CD4-positive, alpha-beta memory T cell (primary cell): ENCODE measurements at regions of chr5 and their contacts with region 1.

Region 1: GRCh38 chr5:157858527-157859226 is at the start of gene CLINT1:
- DNase-seq: peak; percentile 81 to 88 (median 85)
- H3K4me3 ChIP-seq: peak within 1 kb of the TSS; percentile 54 to 82
- H3K4me3 Mint-ChIP-seq: peak within 1 kb of the TSS; percentile 94 to 99 (median 95)
- H3K27ac ChIP-seq: peak within 1 kb of the TSS; percentile 85
- H3K27ac Mint-ChIP-seq: peak within 1 kb of the TSS; percentile 94 to 99 (median 97)
- H3K4me1 ChIP-seq: peaks cover 59% of the 10 kb centered on the region
- H3K4me1 Mint-ChIP-seq: peaks cover 49 to 74% (median 60%) of the 10 kb centered on the region in 4 donors
- H3K27me3 ChIP-seq: no peaks in the 10 kb centered on the region
- H3K27me3 Mint-ChIP-seq: no peaks in the 10 kb centered on the region
- total RNA-seq, gene CLINT1: 70.5 to 73.9 TPM

Region 2: GRCh38 chr5:157731272-157732129 is 127.2 kb before region 1 on chr5 and contains the start of gene THG1L:
- CTCF ChIA-PET with region 1: no interaction called
- POLR2A ChIA-PET with region 1: no interaction called
- intact Hi-C with region 1: loop called (anchors 1 kb)
- DNase-seq: peak; percentile 95 to 98 (median 96)
- H3K4me3 ChIP-seq: peak within 1 kb of the TSS; percentile 79 to 90
- H3K4me3 Mint-ChIP-seq: peak within 1 kb of the TSS; percentile 94 to 100 (median 98)
- H3K27ac ChIP-seq: peak within 1 kb of the TSS; percentile 82
- H3K27ac Mint-ChIP-seq: peak within 1 kb of the TSS; percentile 94 to 99 (median 97)
- H3K4me1 ChIP-seq: peaks cover 10% of the 10 kb centered on the region
- H3K4me1 Mint-ChIP-seq: peaks cover 11 to 24% (median 18%) of the 10 kb centered on the region in 4 donors
- H3K27me3 ChIP-seq: no peaks in the 10 kb centered on the region
- H3K27me3 Mint-ChIP-seq: no peaks in the 10 kb centered on the region
- total RNA-seq, gene THG1L: 9.1 to 10.5 TPM

Region 3: DNA sequence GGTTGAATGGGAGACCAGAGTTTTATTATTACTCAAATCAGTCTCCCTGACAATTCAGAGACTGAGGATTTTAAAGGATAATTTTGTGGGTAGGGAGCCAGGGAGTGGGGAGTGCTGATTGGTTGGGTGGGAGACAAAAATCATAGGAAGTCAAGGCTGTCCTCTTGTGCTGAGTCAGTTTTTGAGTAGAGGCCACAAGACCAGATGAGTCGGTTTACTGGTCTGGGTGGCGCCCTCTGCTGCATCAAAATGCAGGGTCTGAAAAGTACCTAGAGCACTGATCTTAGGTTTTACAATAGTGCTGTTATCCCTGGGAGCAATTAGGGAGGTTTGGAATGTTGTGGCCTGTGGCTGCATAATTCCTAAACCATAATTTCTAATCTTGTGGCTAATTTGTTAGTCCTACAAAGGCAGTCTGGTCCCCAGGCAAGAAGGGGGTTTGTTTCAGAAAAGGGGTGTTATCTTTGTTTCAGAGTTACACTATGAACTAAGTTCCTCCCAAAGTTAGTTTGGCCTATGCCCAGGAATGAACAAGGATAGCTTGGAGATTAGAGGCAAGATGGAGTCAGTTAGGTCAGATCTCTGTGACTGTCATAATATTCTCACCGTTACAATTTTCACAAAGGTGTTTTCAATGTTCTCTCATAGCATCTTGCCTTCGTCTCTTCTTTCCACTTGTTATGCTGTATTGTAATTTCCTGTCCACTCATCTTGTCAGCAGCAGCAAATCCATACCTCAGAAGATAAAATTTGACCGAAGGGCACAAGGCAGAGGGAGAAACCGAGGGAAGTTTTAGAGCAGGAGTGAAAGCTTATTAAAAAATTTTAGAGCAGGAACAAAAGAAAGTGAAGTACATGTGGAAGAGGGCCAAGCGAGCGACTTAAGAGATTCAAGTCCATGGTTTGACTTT is 59.5 kb after region 1 on chr5:
- CTCF ChIA-PET with region 1: interaction called, 6 read pairs
- POLR2A ChIA-PET with region 1: no interaction called
- intact Hi-C with region 1: loop called (anchors 5 kb)
- DNase-seq: peak; percentile 26 to 52 (median 41)
- H3K4me3 ChIP-seq: no peak overlapping the region
- H3K4me3 Mint-ChIP-seq: peak overlapping the region in 5 of 8 donors; percentile 39 to 81 (median 63)
- H3K27ac ChIP-seq: no peak overlapping the region
- H3K27ac Mint-ChIP-seq: peak overlapping the region in 6 of 7 donors; percentile 46 to 94 (median 49)
- H3K4me1 ChIP-seq: peaks cover 23% of the 10 kb centered on the region
- H3K4me1 Mint-ChIP-seq: peaks cover 22 to 28% (median 27%) of the 10 kb centered on the region in 4 donors
- H3K27me3 ChIP-seq: no peaks in the 10 kb centered on the region
- H3K27me3 Mint-ChIP-seq: no peaks in the 10 kb centered on the region